ENCODE measurements at regions of chr1 and their contacts with region 1.

Region 1: DNA sequence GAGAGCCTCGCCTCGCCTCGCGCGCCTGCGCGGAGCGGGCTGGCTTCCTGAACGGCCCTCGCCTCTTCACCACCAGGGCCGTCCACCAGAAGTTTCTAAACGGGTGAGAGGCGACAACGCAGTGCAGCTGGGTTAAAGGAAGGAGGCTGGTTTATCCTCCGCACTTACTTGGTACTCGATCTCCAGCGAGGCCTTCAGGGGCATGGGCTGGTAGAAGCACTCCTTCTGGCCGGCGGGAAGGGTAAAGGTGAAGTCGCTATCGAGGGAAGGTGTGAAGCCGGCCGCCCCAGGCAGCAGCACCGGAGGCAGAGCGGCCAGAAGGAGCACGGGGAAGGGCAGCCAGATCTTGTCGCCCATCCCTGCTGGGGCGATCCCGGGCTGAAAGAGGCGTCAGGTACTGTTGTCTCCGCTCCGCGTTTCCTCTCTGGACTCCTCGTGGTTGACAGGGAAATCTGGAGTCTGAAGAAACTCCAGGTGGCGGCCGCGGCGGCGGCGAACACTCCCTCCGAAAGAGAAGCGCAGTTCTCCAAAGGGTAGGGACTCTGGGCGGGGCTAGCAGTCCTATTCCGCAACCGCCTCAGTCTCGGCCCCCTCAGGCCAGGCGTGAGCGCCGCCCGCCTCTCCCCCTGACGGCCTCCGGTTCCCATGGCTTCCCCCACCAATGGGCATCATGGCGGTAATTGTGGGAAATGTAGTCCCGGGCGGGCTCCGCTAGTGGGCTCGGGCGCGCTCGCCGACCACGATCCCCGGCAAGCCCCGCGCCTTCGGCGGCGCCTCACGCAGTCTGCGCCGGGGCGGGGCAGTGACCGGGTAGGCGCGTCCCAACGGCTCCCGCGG is at the start of gene TMED5:
- DNase-seq: peak; percentile 99
- H3K4me3 ChIP-seq: peak within 1 kb of the TSS; percentile 60 to 95 (median 82)
- H3K27ac ChIP-seq: peak within 1 kb of the TSS; percentile 96 to 99 (median 98)
- H3K4me1 ChIP-seq: peaks cover 0 to 32% (median 23%) of the 10 kb centered on the region in 4 donors
- H3K27me3 ChIP-seq: no peaks in the 10 kb centered on the region
- CTCF ChIP-seq: peak in 3 of 4 experiments; percentile 22 to 52 (median 35)
- EP300 ChIP-seq: no peak
- POLR2A ChIP-seq: peak; percentile 93 to 94
- total RNA-seq, gene TMED5: 41.0 to 59.7 (median 47.0) TPM

Region 2: GRCh38 chr1:92784639-92785500 is 395.2 kb before region 1 on chr1 and contains the start of gene EVI5:
- intact Hi-C with region 1: loop called (anchors 10 kb)
- DNase-seq: peak; percentile 97
- H3K4me3 ChIP-seq: peak within 1 kb of the TSS; percentile 63 to 84 (median 76)
- H3K27ac ChIP-seq: peak within 1 kb of the TSS; percentile 92 to 99 (median 98)
- H3K4me1 ChIP-seq: peaks cover 0 to 25% (median 14%) of the 10 kb centered on the region in 4 donors
- H3K27me3 ChIP-seq: no peaks in the 10 kb centered on the region
- CTCF ChIP-seq: peak in 2 of 4 experiments; percentile 19 to 35
- EP300 ChIP-seq: peak in 1 of 4 donors; percentile 6
- POLR2A ChIP-seq: peak; percentile 38 to 63
- total RNA-seq, gene EVI5: 39.9 to 53.5 (median 46.5) TPM

Region 3: GRCh38 chr1:93078986-93079654 is 101.0 kb before region 1 on chr1 and contains the start of gene MTF2:
- intact Hi-C with region 1: loop called (anchors 1 kb)
- DNase-seq: peak; percentile 97
- H3K4me3 ChIP-seq: peak within 1 kb of the TSS; percentile 70 to 93 (median 78)
- H3K27ac ChIP-seq: peak within 1 kb of the TSS; percentile 82 to 88 (median 84)
- H3K4me1 ChIP-seq: peaks cover 0 to 32% (median 26%) of the 10 kb centered on the region in 4 donors
- H3K27me3 ChIP-seq: no peaks in the 10 kb centered on the region
- CTCF ChIP-seq: no peak
- EP300 ChIP-seq: peak in 2 of 4 donors; percentile 34 to 58
- POLR2A ChIP-seq: peak; percentile 75 to 84
- total RNA-seq, gene MTF2: 12.3 to 17.8 (median 13.5) TPM

Region 4: GRCh38 chr1:93114391-93114790 is 65.7 kb before region 1 on chr1:
- intact Hi-C with region 1: no loop called
- DNase-seq: no peak
- H3K4me3 ChIP-seq: no peak overlapping the region
- H3K27ac ChIP-seq: no peak overlapping the region
- H3K4me1 ChIP-seq: peaks cover 0 to 15% (median 7%) of the 10 kb centered on the region in 4 donors
- H3K27me3 ChIP-seq: no peaks in the 10 kb centered on the region
- CTCF ChIP-seq: no peak
- EP300 ChIP-seq: no peak
- POLR2A ChIP-seq: no peak

Region 5: GRCh38 chr1:93345633-93346420 is 165.7 kb after region 1 on chr1 and contains the start of gene DR1:
- intact Hi-C with region 1: loop called (anchors 1 kb)
- DNase-seq: peak; percentile 97
- H3K4me3 ChIP-seq: peak within 1 kb of the TSS; percentile 91 to 99 (median 96)
- H3K27ac ChIP-seq: peak within 1 kb of the TSS; percentile 94 to 98 (median 96)
- H3K4me1 ChIP-seq: peaks cover 0 to 69% (median 32%) of the 10 kb centered on the region in 4 donors
- H3K27me3 ChIP-seq: no peaks in the 10 kb centered on the region
- CTCF ChIP-seq: no peak
- EP300 ChIP-seq: peak in 2 of 4 donors; percentile 57 to 72
- POLR2A ChIP-seq: peak; percentile 84 to 90
- total RNA-seq, gene DR1: 19.9 to 24.2 (median 20.3) TPM

Measured in sigmoid colon (tissue), 7 donors.